Mammary epithelial cell (primary cell): ENCODE measurements at regions of chr21 and their contacts with region 1.

Region 1: DNA sequence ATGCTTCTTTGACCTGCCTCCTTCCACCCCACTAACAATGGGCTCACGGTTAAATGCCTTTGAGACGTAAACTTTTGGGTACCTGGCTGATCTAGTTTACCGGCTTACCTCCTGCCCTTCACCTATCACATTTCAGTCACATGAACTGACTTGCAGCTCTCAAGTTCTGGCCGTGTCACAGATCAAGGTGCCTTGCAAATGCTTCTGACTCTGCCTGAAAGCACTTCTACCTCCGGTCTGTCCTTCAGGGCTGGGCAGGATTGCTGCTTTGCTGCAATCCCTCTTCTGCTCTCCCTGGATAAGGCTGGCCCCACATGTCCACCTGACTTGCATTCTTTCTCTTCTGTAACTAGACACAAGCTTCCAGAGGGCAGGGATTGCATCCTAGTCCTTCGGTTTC is 69.0 kb downstream of the GRIK1 start:
- DNase-seq: no peak
- H3K4me3 ChIP-seq: no peak overlapping the region
- H3K27ac ChIP-seq: no peak overlapping the region
- H3K4me1 ChIP-seq: no peaks in the 10 kb centered on the region
- H3K27me3 ChIP-seq: peaks cover 4% of the 10 kb centered on the region
- CTCF ChIP-seq: no peak

Region 2: DNA sequence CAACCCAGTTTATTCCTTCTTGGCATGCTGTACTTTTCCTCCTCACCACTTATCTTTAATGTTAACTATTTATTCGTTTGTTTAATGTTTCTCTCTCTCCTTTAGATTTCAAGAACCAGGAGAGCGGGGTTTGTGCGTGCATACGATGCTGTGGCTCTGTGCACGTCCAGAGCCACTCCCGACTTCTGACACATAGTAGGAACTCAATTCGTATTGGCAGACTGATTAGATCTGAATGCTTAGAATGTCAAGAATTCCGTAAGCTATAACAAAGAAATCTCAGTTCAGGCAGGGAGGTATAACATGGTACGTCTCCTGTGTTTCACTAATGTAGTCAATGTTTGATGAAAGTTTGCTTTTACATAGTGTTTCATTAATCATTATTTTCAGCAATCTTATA is 76.3 kb after region 1 on chr21:
- CTCF ChIA-PET with region 1: no interaction called
- dilution Hi-C with region 1: loop called (anchors 5 kb)
- in situ Hi-C with region 1: no loop called
- intact Hi-C with region 1: no loop called
- DNase-seq: no peak
- H3K4me3 ChIP-seq: no peak overlapping the region
- H3K27ac ChIP-seq: no peak overlapping the region
- H3K4me1 ChIP-seq: no peaks in the 10 kb centered on the region
- H3K27me3 ChIP-seq: peaks cover 2% of the 10 kb centered on the region
- CTCF ChIP-seq: no peak